Breast epithelium (tissue), 4 donors: ENCODE measurements at regions of chrX and their contacts with region 1.

Region 1: GRCh38 chrX:9320940-9321339 is 143.9 kb upstream of the TBL1X start:
- DNase-seq: no peak
- H3K4me3 ChIP-seq: no peak overlapping the region
- H3K27ac ChIP-seq: no peak overlapping the region
- H3K4me1 ChIP-seq: no peaks in the 10 kb centered on the region
- H3K27me3 ChIP-seq: peaks cover 0 to 4% of the 10 kb centered on the region in 2 donors
- CTCF ChIP-seq: no peak
- POLR2A ChIP-seq: no peak

Region 2: GRCh38 chrX:9055354-9055753 is 265.6 kb before region 1 on chrX:
- intact Hi-C with region 1: loop called (anchors 5 kb)
- DNase-seq: no peak
- H3K4me3 ChIP-seq: no peak overlapping the region
- H3K27ac ChIP-seq: no peak overlapping the region
- H3K4me1 ChIP-seq: no peaks in the 10 kb centered on the region
- H3K27me3 ChIP-seq: peaks cover 0 to 13% of the 10 kb centered on the region in 2 donors
- CTCF ChIP-seq: no peak
- POLR2A ChIP-seq: no peak